Panc1 (cell line): ENCODE measurements at regions of chr22 and their contacts with region 1.

Region 1: DNA sequence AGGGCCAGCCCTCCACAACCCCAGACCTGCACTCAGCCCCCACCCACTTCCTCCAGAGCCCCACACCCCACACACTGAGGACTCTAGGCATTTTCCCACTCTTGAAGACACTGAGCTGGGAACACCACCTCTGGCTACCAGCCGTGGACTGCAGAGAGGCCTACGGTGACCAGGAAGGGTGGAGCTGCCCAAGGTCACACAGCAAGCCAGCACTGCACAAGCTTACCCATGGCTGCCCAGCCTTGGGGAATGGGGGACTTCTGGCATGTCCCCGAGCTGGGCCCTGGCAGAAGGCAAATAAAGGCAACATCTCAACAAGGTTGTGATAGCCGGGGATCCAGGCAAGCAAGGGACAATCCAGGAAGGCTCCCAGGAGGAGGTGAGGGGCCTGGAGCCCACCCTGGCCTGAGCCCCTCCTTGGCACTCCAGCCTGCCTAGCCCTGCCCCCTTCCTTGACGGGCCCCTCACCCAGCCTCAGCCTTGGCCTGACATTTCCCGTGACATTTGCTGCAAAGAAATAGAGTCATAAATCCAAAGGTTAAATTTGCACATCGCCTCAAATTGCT is 5.5 kb downstream of the RTN4R start:
- DNase-seq: no peak
- ATAC-seq: no peak
- H3K4me3 ChIP-seq: no peak overlapping the region
- H3K27ac ChIP-seq: no peak overlapping the region
- H3K4me1 ChIP-seq: no peaks in the 10 kb centered on the region; the same call in 1 of the 2 replicates
- H3K27me3 ChIP-seq: no peaks in the 10 kb centered on the region
- CTCF ChIP-seq: no peak

Region 2: GRCh38 chr22:20186183-20186870 is 76.3 kb before region 1 on chr22:
- CTCF ChIA-PET with region 1: no interaction called
- POLR2A ChIA-PET with region 1: interaction called, 11 read pairs
- in situ Hi-C with region 1: no loop called
- intact Hi-C with region 1: no loop called
- DNase-seq: no peak
- ATAC-seq: no peak
- H3K4me3 ChIP-seq: no peak overlapping the region
- H3K27ac ChIP-seq: no peak overlapping the region
- H3K4me1 ChIP-seq: no peaks in the 10 kb centered on the region
- H3K27me3 ChIP-seq: no peaks in the 10 kb centered on the region
- CTCF ChIP-seq: no peak; the same call in 1 of the 2 replicates